Breast epithelium (tissue), 4 donors: ENCODE measurements at regions of chr15 and their contacts with region 1.

Region 1: GRCh38 chr15:83538682-83539081 is 91.5 kb downstream of the SH3GL3 start:
- DNase-seq: no peak
- H3K4me3 ChIP-seq: no peak overlapping the region
- H3K27ac ChIP-seq: no peak overlapping the region
- H3K4me1 ChIP-seq: no peaks in the 10 kb centered on the region
- H3K27me3 ChIP-seq: no peaks in the 10 kb centered on the region
- CTCF ChIP-seq: no peak
- POLR2A ChIP-seq: no peak

Region 2: DNA sequence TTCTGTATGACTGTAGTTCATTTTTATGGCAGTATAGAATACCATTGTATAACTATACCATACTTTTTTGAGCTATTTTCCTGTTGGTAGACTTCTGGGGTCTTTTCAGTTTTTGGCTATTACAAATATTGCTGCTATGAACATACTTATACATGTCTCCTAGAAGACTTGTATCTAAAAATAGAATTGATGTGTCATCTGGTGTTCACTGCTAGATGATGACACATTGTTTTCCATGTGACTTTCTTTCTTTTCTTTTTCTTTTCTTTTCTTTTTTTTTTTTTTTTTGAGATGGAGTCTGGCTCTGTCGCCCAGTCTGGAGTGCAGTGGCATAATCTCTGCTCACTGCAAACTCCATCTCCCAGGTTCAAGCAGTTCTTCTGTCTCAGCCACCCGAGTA is 21.7 kb before region 1 on chr15:
- intact Hi-C with region 1: loop called (anchors 1 kb)
- DNase-seq: no peak
- H3K4me3 ChIP-seq: no peak overlapping the region
- H3K27ac ChIP-seq: no peak overlapping the region
- H3K4me1 ChIP-seq: no peaks in the 10 kb centered on the region
- H3K27me3 ChIP-seq: peaks cover 0 to 5% of the 10 kb centered on the region in 2 donors
- CTCF ChIP-seq: no peak
- POLR2A ChIP-seq: no peak